ENCODE measurements at regions of chr1 and their contacts with region 1.

Region 1: GRCh38 chr1:239976130-239976968 is 115.3 kb upstream of the FMN2 start:
- DNase-seq: peak; percentile 65
- H3K4me3 Mint-ChIP-seq: no peak overlapping the region
- H3K27ac Mint-ChIP-seq: no peak overlapping the region
- H3K4me1 Mint-ChIP-seq: no peaks in the 10 kb centered on the region
- H3K27me3 Mint-ChIP-seq: peaks cover 4% of the 10 kb centered on the region

Region 2: DNA sequence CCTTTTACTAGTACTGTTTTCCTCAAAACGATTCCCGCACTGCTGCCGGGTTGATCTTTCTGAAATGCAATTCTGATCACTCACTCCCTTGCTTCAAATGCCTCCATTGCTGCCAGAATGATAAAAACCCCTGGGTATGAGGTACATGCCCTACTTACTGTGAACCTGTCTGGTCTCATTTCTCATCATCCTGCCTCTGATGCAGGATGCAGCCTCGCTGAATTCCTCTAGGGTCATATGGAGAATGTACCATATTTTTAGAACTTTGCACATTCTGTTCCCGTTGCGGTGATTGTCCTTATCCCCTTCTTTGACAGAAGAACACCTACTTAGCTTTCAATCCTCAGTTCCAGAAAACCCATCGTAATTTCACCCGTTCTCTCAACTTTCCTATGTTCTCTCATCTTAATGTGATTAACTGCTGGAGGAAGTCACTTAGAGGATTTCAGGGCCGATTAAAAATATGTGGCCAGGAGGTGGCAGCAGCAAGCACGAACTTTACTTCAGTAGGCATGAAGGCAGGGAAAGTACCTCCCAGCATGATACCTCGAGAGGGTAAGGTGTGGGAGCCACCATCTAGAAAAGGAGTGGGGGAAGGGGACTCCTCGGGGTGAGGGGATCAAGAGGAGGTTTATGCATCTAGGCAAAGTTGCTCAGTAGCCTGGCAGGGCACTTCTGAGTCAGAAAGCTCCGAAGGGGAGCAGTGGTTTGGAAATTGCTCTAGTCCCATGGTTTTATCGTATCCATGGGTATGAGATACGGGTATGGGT is 1724.1 kb before region 1 on chr1:
- CTCF ChIA-PET with region 1: no interaction called
- intact Hi-C with region 1: loop called (anchors 2 kb)
- DNase-seq: peak; percentile 57
- H3K4me3 Mint-ChIP-seq: no peak overlapping the region
- H3K27ac Mint-ChIP-seq: no peak overlapping the region
- H3K4me1 Mint-ChIP-seq: no peaks in the 10 kb centered on the region
- H3K27me3 Mint-ChIP-seq: no peaks in the 10 kb centered on the region

Region 3: DNA sequence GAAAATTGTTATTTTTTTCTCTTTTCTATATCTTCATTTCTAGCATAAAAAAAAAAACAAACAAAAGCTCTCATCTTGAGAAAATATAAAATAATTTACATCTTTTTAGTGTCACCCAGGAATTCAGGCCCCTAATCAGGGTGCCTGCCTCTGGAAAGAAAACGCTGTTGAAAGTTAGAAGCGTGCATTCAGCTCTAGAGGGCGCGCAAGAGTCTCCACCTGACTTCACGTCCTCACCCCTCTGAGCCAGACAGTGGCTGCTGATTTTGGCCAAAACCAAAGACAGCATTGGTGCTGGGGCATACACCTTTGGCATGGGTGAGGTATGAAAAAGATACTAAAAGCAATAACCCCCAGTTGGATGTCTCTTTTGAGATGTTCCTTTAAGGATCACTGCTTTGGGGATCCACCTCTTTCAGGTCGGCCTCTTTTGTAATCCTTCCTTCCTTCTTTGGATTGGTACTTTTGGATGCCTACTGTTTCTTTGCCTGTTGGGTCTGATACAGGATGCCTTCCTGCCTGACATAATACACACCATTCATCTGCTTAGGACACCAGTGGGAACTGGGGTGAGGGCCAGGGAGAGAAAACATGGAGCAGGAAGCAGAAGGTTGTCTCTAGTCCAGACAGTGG is 667.5 kb before region 1 on chr1:
- CTCF ChIA-PET with region 1: no interaction called
- intact Hi-C with region 1: loop called (anchors 1 kb)
- DNase-seq: peak; percentile 54
- H3K4me3 Mint-ChIP-seq: no peak overlapping the region
- H3K27ac Mint-ChIP-seq: no peak overlapping the region
- H3K4me1 Mint-ChIP-seq: no peaks in the 10 kb centered on the region
- H3K27me3 Mint-ChIP-seq: peaks cover 4% of the 10 kb centered on the region

Region 4: DNA sequence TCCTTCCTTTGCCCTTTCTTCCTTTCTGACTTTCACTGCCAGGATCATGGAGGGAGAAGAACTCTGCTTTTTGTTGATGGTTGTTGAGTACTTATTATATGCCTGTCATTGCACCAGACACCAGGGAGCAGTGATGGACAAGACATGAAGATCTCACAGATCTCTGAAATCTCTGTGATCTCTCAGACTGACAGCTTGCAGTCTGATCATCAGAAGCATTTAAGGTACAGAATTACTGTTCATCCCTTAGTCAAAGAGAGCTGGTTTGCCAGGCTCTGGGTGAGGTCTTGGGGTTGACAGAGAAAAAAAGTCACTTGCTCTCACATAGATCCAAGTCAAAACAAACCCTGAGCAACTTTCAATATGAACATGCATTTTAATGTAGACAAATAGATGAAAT is 184.2 kb before region 1 on chr1:
- CTCF ChIA-PET with region 1: no interaction called
- intact Hi-C with region 1: loop called (anchors 10 kb)
- DNase-seq: peak; percentile 46
- H3K4me3 Mint-ChIP-seq: no peak overlapping the region
- H3K27ac Mint-ChIP-seq: no peak overlapping the region
- H3K4me1 Mint-ChIP-seq: peaks cover 11% of the 10 kb centered on the region
- H3K27me3 Mint-ChIP-seq: no peaks in the 10 kb centered on the region

Region 5: GRCh38 chr1:239914751-239915231 is 61.6 kb before region 1 on chr1:
- CTCF ChIA-PET with region 1: no interaction called
- intact Hi-C with region 1: no loop called
- DNase-seq: no peak
- H3K4me3 Mint-ChIP-seq: no peak overlapping the region
- H3K27ac Mint-ChIP-seq: no peak overlapping the region
- H3K4me1 Mint-ChIP-seq: no peaks in the 10 kb centered on the region
- H3K27me3 Mint-ChIP-seq: peaks cover 11% of the 10 kb centered on the region

Region 6: GRCh38 chr1:239951511-239952140 is 24.7 kb before region 1 on chr1:
- CTCF ChIA-PET with region 1: interaction called, 28 read pairs
- intact Hi-C with region 1: loop called (anchors 1 kb)
- DNase-seq: peak; percentile 74
- H3K4me3 Mint-ChIP-seq: no peak overlapping the region
- H3K27ac Mint-ChIP-seq: no peak overlapping the region
- H3K4me1 Mint-ChIP-seq: no peaks in the 10 kb centered on the region
- H3K27me3 Mint-ChIP-seq: no peaks in the 10 kb centered on the region

Region 7: GRCh38 chr1:239963856-239964255 is 12.5 kb before region 1 on chr1:
- CTCF ChIA-PET with region 1: no interaction called
- intact Hi-C with region 1: no loop called
- DNase-seq: no peak
- H3K4me3 Mint-ChIP-seq: no peak overlapping the region
- H3K27ac Mint-ChIP-seq: no peak overlapping the region
- H3K4me1 Mint-ChIP-seq: no peaks in the 10 kb centered on the region
- H3K27me3 Mint-ChIP-seq: peaks cover 9% of the 10 kb centered on the region

Region 8: GRCh38 chr1:240027059-240027462 is 50.7 kb after region 1 on chr1:
- CTCF ChIA-PET with region 1: no interaction called
- intact Hi-C with region 1: no loop called
- DNase-seq: peak; percentile 28
- H3K4me3 Mint-ChIP-seq: no peak overlapping the region
- H3K27ac Mint-ChIP-seq: no peak overlapping the region
- H3K4me1 Mint-ChIP-seq: no peaks in the 10 kb centered on the region
- H3K27me3 Mint-ChIP-seq: peaks cover 5% of the 10 kb centered on the region

Measured in activated naive CD4-positive, alpha-beta T cell treated with anti-CD3 and anti-CD28 coated beads for 36 hours (primary cell).